Left ventricle myocardium superior (tissue), 1 donor: ENCODE measurements at regions of chr12 and their contacts with region 1.

Region 1: DNA sequence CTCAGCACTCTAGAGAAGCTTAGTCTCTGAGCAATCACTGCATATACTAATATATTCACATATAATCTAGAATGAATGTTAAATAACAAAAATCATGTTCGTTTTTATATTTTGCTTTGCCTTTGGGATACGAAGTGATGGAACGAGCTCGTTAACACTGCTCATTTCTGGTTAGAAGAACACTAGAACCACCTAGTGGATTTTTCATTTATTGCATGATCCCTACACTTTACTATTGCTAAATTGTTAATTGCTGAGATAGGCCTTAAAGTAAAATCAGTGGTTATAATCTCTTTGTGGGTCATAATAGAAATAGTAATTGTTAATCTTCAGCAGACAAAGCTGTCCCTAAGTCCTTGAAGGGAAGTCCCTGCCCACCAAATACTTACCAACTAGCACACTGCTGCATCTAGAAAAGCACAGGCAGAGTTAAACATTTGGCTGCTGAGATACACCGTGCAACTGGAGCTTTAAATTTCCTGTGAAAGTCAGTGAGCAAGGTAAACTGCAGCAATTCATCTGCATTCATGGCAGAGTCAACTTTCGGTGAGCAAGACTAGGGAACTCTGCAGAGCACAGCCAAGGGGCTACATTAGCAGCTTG is 353.7 kb downstream of the APAF1 start:
- DNase-seq: no peak
- ATAC-seq: peak; percentile 76

Region 2: DNA sequence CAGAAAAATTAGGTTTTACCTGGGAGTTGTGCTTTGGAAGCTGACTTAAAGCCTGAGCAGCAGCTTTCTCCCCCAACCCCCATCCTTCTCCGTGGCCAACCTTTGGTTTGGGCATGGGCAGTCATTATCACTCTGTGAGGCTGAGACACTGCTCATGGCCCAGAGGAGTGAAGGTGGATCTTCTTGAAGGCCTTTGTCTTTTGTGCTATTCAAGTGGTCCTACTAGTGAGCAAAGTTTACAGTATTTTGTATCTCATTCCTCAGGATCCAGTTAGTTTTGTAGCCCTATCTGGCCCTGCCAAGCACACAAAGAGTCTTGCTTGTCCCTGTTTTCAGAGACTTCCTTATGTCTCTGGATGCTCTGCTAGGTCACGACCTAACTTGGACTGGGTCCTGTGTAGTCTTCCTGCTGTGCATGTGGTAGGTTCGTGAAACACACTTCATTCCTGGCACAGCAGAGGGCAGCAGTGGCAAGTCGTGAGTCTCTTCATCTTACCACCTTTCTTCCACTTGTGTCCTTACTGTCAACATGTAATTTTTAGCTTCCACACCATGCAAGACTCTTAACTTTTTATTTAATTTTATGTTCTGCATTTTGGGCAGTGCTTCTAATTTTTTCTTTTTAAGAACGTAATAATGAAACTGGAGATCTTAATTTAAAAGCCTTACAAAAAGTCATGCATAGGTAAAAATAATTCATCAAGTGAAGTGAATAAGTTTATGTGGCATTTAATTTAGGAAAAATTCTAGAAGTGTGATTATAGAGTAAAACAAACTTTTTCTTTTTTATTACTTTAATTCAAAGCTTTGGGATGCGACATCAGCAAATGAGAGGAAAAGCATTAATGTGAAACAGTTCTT is 300.0 kb before region 1 on chr12:
- intact Hi-C with region 1: loop called (anchors 5 kb)
- DNase-seq: peak; percentile 51
- ATAC-seq: peak; percentile 94